ENCODE measurements at regions of chr11 and their contacts with region 1.

Region 1: GRCh38 chr11:10735481-10736475 is 15.3 kb upstream of the CTR9 start:
- DNase-seq: peak; percentile 97 to 98
- ATAC-seq: peak; percentile 99
- H3K4me3 ChIP-seq: no peak overlapping the region
- H3K27ac ChIP-seq: no peak overlapping the region
- H3K4me1 ChIP-seq: peaks cover 0 to 2% of the 10 kb centered on the region in 2 donors
- H3K27me3 ChIP-seq: no peaks in the 10 kb centered on the region

Region 2: GRCh38 chr11:10322830-10323792 is 412.7 kb before region 1 on chr11:
- intact Hi-C with region 1: loop called in 1 of 2 experiments (anchors 10 kb)
- DNase-seq: peak in 1 of 2 donors; percentile 72
- ATAC-seq: peak; percentile 82
- H3K4me3 ChIP-seq: no peak overlapping the region
- H3K27ac ChIP-seq: peak overlapping the region; percentile 86 to 96
- H3K4me1 ChIP-seq: peaks cover 6 to 7% of the 10 kb centered on the region in 2 donors
- H3K27me3 ChIP-seq: no peaks in the 10 kb centered on the region

Region 3: GRCh38 chr11:10405855-10406592 is 329.8 kb before region 1 on chr11:
- intact Hi-C with region 1: loop called (anchors 1 to 2 kb)
- DNase-seq: peak; percentile 81
- ATAC-seq: peak; percentile 87
- H3K4me3 ChIP-seq: no peak overlapping the region
- H3K27ac ChIP-seq: no peak overlapping the region
- H3K4me1 ChIP-seq: no peaks in the 10 kb centered on the region
- H3K27me3 ChIP-seq: no peaks in the 10 kb centered on the region

Region 4: GRCh38 chr11:10514210-10514609 is 221.6 kb before region 1 on chr11:
- intact Hi-C with region 1: loop called in 1 of 2 experiments (anchors 5 kb)
- DNase-seq: no peak
- ATAC-seq: no peak
- H3K4me3 ChIP-seq: no peak overlapping the region
- H3K27ac ChIP-seq: peak overlapping the region in 1 of 2 donors; percentile 67
- H3K4me1 ChIP-seq: peaks cover 4 to 8% of the 10 kb centered on the region in 2 donors
- H3K27me3 ChIP-seq: no peaks in the 10 kb centered on the region

Region 5: GRCh38 chr11:10564696-10565318 is 171.0 kb before region 1 on chr11:
- intact Hi-C with region 1: loop called (anchors 2 to 10 kb)
- DNase-seq: no peak
- ATAC-seq: no peak
- H3K4me3 ChIP-seq: no peak overlapping the region
- H3K27ac ChIP-seq: no peak overlapping the region
- H3K4me1 ChIP-seq: peaks cover 0 to 9% of the 10 kb centered on the region in 2 donors
- H3K27me3 ChIP-seq: no peaks in the 10 kb centered on the region

Region 6: GRCh38 chr11:10612216-10612862 is 123.4 kb before region 1 on chr11:
- intact Hi-C with region 1: no loop called
- DNase-seq: no peak
- ATAC-seq: no peak
- H3K4me3 ChIP-seq: no peak overlapping the region
- H3K27ac ChIP-seq: peak overlapping the region in 1 of 2 donors; percentile 54
- H3K4me1 ChIP-seq: peaks cover 0 to 7% of the 10 kb centered on the region in 2 donors
- H3K27me3 ChIP-seq: no peaks in the 10 kb centered on the region

Region 7: GRCh38 chr11:10623797-10624761 is 111.7 kb before region 1 on chr11:
- intact Hi-C with region 1: loop called (anchors 5 to 10 kb)
- DNase-seq: no peak
- ATAC-seq: peak; percentile 54
- H3K4me3 ChIP-seq: no peak overlapping the region
- H3K27ac ChIP-seq: peak overlapping the region; percentile 62 to 74
- H3K4me1 ChIP-seq: peaks cover 0 to under 1% of the 10 kb centered on the region in 2 donors
- H3K27me3 ChIP-seq: no peaks in the 10 kb centered on the region

Region 8: DNA sequence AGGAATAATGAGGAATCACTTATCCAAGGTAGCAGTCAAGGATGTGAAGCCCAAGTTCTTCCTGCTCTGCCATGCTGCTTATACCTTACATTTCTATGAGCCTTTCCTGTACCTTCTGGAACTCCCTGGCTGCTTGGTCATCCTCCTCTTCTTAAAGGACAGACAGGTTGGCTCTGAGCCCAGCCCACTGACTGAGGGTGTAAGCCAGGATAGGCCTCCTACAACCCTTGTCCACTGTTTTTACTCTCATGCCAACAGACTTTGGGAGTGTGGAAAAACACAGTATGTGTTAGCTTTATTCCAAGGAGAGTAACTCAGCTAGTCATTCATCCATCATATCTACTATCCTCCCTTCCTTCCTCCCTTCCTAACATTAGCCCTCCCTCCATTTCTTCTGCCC is 89.8 kb before region 1 on chr11:
- intact Hi-C with region 1: loop called in 1 of 2 experiments (anchors 5 kb)
- DNase-seq: no peak
- ATAC-seq: no peak
- H3K4me3 ChIP-seq: no peak overlapping the region
- H3K27ac ChIP-seq: peak overlapping the region; percentile 20 to 75
- H3K4me1 ChIP-seq: peaks cover 2 to 6% of the 10 kb centered on the region in 2 donors
- H3K27me3 ChIP-seq: no peaks in the 10 kb centered on the region

Region 9: GRCh38 chr11:10716127-10716526 is 19.7 kb before region 1 on chr11:
- intact Hi-C with region 1: no loop called
- DNase-seq: no peak
- ATAC-seq: no peak
- H3K4me3 ChIP-seq: no peak overlapping the region
- H3K27ac ChIP-seq: no peak overlapping the region
- H3K4me1 ChIP-seq: no peaks in the 10 kb centered on the region
- H3K27me3 ChIP-seq: no peaks in the 10 kb centered on the region

Region 10: DNA sequence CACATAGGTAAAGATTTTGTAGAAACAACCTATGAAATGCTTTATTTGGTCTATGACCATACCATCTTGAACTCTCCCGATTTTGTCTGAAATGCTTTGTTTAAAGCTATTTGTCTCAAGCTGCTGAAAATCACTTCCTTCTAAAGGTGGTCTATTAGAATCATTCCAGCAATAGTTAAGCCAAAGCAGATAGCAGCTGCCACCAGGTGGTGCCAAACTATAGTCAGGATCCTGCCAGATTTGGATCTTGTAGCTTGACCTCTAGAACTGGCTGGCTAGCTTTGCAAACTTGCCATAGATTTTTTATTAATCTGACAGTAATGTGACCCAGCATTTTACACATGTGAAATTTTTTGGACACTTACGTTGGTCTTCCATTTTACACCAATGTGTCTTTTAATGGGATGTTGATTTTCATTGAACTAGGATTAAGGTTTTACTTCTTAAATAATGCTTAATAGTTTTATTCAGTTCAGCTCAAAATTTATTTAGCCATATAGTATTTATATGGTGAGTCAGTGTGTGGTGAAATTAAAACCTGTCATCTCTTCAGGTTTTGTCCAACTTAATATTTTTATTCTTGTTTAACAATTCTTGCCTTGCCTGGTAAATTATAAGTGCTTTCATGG is 35.0 kb after region 1 on chr11:
- intact Hi-C with region 1: no loop called
- DNase-seq: no peak
- ATAC-seq: no peak
- H3K4me3 ChIP-seq: no peak overlapping the region
- H3K27ac ChIP-seq: no peak overlapping the region
- H3K4me1 ChIP-seq: no peaks in the 10 kb centered on the region
- H3K27me3 ChIP-seq: no peaks in the 10 kb centered on the region

Region 11: GRCh38 chr11:10792398-10792975 is 56.7 kb after region 1 on chr11:
- intact Hi-C with region 1: no loop called
- DNase-seq: peak; percentile 91 to 97
- ATAC-seq: peak; percentile 95
- H3K4me3 ChIP-seq: no peak overlapping the region
- H3K27ac ChIP-seq: no peak overlapping the region
- H3K4me1 ChIP-seq: no peaks in the 10 kb centered on the region
- H3K27me3 ChIP-seq: no peaks in the 10 kb centered on the region

Measured in aorta (tissue), 5 donors.